Activated B cell treated with CpG ODN at 0.5 μM for 24 hours (primary cell): ENCODE measurements at regions of chr10 and their contacts with region 1.

Region 1: DNA sequence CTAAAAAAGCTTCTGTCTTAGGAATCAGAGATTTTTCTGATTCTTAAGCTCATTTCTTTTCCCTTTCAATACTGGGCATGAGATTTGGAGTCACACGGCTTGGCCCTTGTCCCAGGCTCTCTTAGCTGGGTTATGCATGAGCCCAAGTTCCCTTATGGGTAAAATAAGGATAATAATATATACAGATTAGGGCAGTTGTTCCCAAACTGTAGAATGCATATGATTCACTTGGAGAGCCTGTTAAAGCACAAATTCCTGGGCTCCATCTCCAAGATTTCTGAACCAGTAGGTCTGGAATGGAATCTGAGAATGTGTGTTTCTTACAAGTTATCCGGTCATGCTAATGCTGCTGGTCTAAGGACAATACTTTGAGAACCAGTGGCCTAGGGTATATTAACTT is 154.0 kb downstream of the REEP3 start:
- DNase-seq: no peak
- ATAC-seq: no peak
- H3K4me3 Mint-ChIP-seq: no peak overlapping the region
- H3K27ac Mint-ChIP-seq: no peak overlapping the region
- H3K4me1 Mint-ChIP-seq: no peaks in the 10 kb centered on the region
- H3K27me3 Mint-ChIP-seq: no peaks in the 10 kb centered on the region
- CTCF ChIP-seq: no peak

Region 2: GRCh38 chr10:63227207-63227915 is 447.8 kb before region 1 on chr10:
- CTCF ChIA-PET with region 1: no interaction called
- POLR2A ChIA-PET with region 1: no interaction called
- intact Hi-C with region 1: no loop called
- DNase-seq: no peak
- ATAC-seq: no peak
- H3K4me3 Mint-ChIP-seq: peak overlapping the region; percentile 12
- H3K27ac Mint-ChIP-seq: peak overlapping the region; percentile 59
- H3K4me1 Mint-ChIP-seq: peaks cover 71% of the 10 kb centered on the region
- H3K27me3 Mint-ChIP-seq: no peaks in the 10 kb centered on the region
- CTCF ChIP-seq: no peak

Region 3: DNA sequence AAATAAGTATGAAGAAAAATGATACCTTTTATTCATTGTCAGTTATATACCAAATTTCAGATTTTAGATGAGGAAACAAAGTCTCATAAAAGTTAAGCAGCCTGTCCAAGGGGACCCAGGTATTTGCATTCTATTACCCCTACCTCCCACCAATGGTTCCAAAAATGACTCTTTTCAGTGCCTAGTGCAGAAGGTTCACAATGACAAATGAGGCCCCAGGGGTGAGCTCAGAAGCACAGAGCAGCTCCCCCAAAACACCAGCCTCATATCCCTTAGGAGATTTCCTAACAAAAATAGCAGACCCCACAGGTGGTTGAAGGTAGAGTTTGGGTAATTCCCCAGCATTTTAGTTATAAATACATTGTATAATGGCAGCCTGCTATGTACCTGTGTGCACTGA is 14.6 kb after region 1 on chr10:
- CTCF ChIA-PET with region 1: no interaction called
- POLR2A ChIA-PET with region 1: no interaction called
- intact Hi-C with region 1: loop called (anchors 2 kb)
- DNase-seq: no peak
- ATAC-seq: no peak
- H3K4me3 Mint-ChIP-seq: no peak overlapping the region
- H3K27ac Mint-ChIP-seq: no peak overlapping the region
- H3K4me1 Mint-ChIP-seq: peaks cover 16% of the 10 kb centered on the region
- H3K27me3 Mint-ChIP-seq: no peaks in the 10 kb centered on the region
- CTCF ChIP-seq: no peak